SK-N-SH (cell line): ENCODE measurements at regions of chr6 and their contacts with region 1.

Region 1: GRCh38 chr6:122869437-122870024 is 80.5 kb downstream of the SMPDL3A start:
- DNase-seq: peak; percentile 60
- H3K4me3 ChIP-seq: peak overlapping the region in 1 of 2 experiments; percentile 38; a peak in 1 of 4 replicates
- H3K27ac ChIP-seq: no peak overlapping the region
- H3K4me1 ChIP-seq: peaks cover 0 to 9% of the 10 kb centered on the region in 2 experiments; a peak in 1 of 4 replicates
- H3K27me3 ChIP-seq: no peaks in the 10 kb centered on the region
- CTCF ChIP-seq: peak; percentile 62
- EP300 ChIP-seq: no peak
- RAD21 ChIP-seq: peak; percentile 95

Region 2: DNA sequence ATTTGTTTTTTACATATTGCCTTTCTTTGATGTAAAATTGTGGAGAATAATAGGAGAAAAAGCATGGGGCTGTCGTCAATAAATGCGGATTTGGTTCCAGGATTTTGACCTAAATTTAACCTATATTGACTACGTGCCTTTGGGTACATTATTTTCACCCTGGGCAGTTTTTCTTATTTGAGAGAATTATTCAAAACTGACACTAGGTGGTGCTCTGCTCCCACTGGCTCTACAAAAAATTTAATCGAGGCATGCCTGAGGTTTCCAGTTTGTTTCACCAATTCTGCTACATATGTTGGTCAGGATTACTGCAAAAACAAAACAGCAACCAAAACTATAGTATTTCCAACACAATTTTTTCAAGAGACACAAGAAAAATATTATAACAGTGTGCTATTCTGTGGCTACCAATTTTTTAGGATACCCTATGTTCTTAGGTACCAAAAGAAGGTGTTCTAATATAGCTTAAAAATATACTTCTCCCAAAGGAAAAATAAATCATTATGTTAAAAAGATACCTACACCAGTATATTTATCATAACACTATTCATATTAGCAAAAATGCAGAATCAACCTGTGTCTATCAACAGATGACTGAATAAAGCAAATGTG is 138.7 kb before region 1 on chr6:
- CTCF ChIA-PET with region 1: interaction called, 11 read pairs
- POLR2A ChIA-PET with region 1: no interaction called
- DNase-seq: peak; percentile 20
- H3K4me3 ChIP-seq: no peak overlapping the region; a peak in 1 of 4 replicates
- H3K27ac ChIP-seq: no peak overlapping the region
- H3K4me1 ChIP-seq: peaks cover 0 to under 1% of the 10 kb centered on the region in 2 experiments; a peak in 1 of 4 replicates
- H3K27me3 ChIP-seq: peaks cover 48% of the 10 kb centered on the region
- CTCF ChIP-seq: peak; percentile 83
- EP300 ChIP-seq: no peak
- RAD21 ChIP-seq: peak; percentile 83

Region 3: GRCh38 chr6:122947355-122947754 is 77.8 kb after region 1 on chr6:
- CTCF ChIA-PET with region 1: interaction called, 12 read pairs
- POLR2A ChIA-PET with region 1: no interaction called
- DNase-seq: peak; percentile 36
- H3K4me3 ChIP-seq: no peak overlapping the region
- H3K27ac ChIP-seq: no peak overlapping the region
- H3K4me1 ChIP-seq: no peaks in the 10 kb centered on the region
- H3K27me3 ChIP-seq: no peaks in the 10 kb centered on the region
- CTCF ChIP-seq: no peak
- EP300 ChIP-seq: no peak
- RAD21 ChIP-seq: peak; percentile 72

Region 4: GRCh38 chr6:123316733-123317323 is 447.3 kb after region 1 on chr6:
- CTCF ChIA-PET with region 1: interaction called, 53 read pairs
- POLR2A ChIA-PET with region 1: no interaction called
- DNase-seq: peak; percentile 0
- H3K4me3 ChIP-seq: no peak overlapping the region
- H3K27ac ChIP-seq: no peak overlapping the region
- H3K4me1 ChIP-seq: no peaks in the 10 kb centered on the region
- H3K27me3 ChIP-seq: no peaks in the 10 kb centered on the region
- CTCF ChIP-seq: peak; percentile 62
- EP300 ChIP-seq: no peak
- RAD21 ChIP-seq: peak; percentile 68

Region 5: DNA sequence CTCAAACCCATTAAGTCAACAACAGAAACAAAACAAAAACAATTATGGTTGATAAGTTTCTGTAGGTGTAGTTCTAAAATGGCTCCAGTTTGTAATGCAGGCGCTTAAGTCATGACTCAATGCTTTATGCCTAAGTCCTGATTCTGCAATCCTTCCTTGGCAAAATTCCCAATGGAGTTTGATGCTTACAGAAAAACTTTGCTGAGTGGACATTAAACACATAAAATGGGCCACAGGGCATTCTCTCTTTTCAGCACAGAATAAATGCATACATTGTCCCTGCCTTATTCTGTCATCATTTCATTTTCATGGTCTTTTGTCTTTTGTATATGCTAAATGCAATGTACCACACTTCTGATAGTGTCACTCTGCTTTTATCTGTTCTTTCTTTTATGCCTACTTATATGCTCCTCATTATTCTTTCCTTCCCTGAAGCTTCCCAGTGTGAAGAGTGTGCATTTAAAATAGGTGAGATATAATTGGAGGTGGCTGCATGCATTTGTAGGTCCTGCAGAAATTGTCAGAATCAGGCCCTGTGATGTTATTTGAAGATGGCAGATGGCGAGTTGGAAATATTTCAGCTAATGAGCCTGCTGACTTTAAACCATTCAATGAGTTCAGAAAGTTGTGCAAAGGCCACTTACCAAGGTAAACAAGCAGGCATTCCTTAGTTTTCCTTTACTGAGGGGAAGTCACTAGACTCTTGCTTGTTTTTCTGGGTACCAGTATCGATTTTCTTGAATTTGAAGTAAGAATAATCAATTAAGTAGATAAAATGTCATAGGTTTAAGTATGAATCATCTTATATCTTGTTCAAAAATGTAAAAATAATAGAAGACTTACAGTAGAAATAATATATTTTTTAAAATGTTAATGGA is 454.2 kb after region 1 on chr6:
- CTCF ChIA-PET with region 1: interaction called, 53 read pairs
- POLR2A ChIA-PET with region 1: no interaction called
- DNase-seq: no peak
- H3K4me3 ChIP-seq: no peak overlapping the region
- H3K27ac ChIP-seq: no peak overlapping the region
- H3K4me1 ChIP-seq: no peaks in the 10 kb centered on the region
- H3K27me3 ChIP-seq: no peaks in the 10 kb centered on the region
- CTCF ChIP-seq: no peak
- EP300 ChIP-seq: no peak
- RAD21 ChIP-seq: no peak

Region 6: DNA sequence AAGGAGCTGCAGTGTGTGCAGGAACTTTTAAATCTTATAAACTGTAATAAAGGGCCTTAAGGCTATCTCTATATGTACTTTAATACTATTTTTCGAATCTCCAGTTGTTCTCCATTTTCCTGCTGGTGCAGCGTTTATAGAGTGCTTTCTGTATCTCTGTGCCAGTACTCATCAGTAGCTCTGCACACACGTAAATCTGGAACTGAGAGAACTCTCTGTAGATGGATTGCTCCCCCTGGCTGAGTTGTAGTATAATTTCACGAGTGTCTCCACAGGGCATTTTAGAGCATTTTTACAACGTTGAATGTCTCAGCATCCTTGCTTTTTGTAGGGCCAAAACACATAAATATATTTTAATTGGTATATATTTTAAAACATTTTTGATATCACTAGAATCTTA is 510.7 kb after region 1 on chr6:
- CTCF ChIA-PET with region 1: interaction called, 27 read pairs
- POLR2A ChIA-PET with region 1: no interaction called
- DNase-seq: peak; percentile 5
- H3K4me3 ChIP-seq: no peak overlapping the region; a peak in 1 of 4 replicates
- H3K27ac ChIP-seq: no peak overlapping the region
- H3K4me1 ChIP-seq: peaks cover 0 to 18% of the 10 kb centered on the region in 2 experiments; a peak in 1 of 4 replicates
- H3K27me3 ChIP-seq: no peaks in the 10 kb centered on the region
- CTCF ChIP-seq: peak; percentile 42; the same call in 1 of the 2 replicates
- EP300 ChIP-seq: no peak
- RAD21 ChIP-seq: peak; percentile 52

Region 7: GRCh38 chr6:123715006-123715875 is 845.7 kb after region 1 on chr6:
- CTCF ChIA-PET with region 1: interaction called, 13 read pairs
- POLR2A ChIA-PET with region 1: no interaction called
- DNase-seq: peak; percentile 10
- H3K4me3 ChIP-seq: no peak overlapping the region
- H3K27ac ChIP-seq: no peak overlapping the region
- H3K4me1 ChIP-seq: peaks cover 0 to 4% of the 10 kb centered on the region in 2 experiments; a peak in 1 of 4 replicates
- H3K27me3 ChIP-seq: no peaks in the 10 kb centered on the region
- CTCF ChIP-seq: peak; percentile 74
- EP300 ChIP-seq: no peak
- RAD21 ChIP-seq: peak; percentile 66